WTC11 (cell line): ENCODE measurements at regions of chr19 and their contacts with region 1.

Region 1: DNA sequence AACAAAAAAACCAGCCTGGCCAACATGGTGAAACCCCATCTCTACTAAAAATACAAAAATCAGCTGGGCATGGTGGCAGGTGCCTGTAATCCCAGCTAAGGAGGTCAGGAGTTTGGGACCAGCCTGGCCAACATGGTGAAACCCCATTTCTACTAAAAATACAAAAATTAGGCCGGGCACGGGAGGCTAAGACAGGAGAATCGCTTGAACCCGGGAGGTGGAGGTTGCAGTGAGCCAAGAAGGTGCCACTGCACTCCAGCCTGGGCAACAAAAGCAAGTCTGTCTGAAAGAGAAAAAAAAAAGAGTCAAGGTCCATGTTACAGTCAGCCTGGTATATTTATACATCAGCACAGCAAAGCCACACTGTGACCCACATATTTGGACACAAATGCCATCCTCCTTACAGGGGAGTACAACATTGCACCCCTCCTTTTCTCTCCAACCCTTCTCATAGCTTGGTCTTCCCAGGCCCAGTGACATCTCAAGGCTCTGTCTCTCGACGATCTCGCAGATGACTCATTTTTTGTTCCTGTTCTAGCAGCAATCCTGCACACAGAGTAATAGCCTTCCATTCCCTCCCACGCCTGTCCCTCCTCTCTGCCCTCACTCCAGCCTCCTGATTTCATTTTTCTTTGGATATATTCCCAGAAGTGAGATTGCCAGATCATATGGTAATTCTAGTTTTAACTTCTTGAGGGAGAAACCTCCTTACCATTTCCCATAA is 21.0 kb upstream of the DPP9 start:
- DNase-seq: no peak
- ATAC-seq: no peak
- H3K4me3 Mint-ChIP-seq: no peak overlapping the region
- H3K27ac Mint-ChIP-seq: no peak overlapping the region
- H3K4me1 Mint-ChIP-seq: peaks cover 12% of the 10 kb centered on the region
- H3K27me3 Mint-ChIP-seq: peaks cover 3% of the 10 kb centered on the region; the same call in 1 of the 2 replicates
- CTCF ChIP-seq: no peak

Region 2: DNA sequence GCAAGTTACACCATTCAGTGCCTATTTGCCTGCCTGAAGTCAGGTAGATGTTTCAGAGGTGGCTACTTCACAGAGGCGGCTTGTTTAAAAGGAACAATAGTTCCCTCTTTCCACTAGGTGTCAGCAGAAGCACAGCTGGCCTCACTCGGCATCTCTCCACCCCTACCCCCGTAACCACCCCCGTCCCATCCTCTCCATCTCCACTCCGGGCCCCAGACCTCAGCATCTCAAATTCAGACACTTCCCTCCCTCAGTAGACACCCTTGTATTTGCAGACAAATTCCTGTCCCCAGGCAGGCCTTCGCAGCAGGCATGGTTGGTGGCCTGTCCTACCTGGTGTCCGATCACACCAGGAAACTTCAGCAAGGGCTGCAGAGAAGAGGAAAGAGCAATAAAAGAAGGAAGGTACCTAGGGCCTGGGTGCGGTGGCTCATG is 11.9 kb before region 1 on chr19:
- CTCF ChIA-PET with region 1: interaction called, 12 read pairs
- POLR2A ChIA-PET with region 1: no interaction called
- DNase-seq: peak; percentile 74
- ATAC-seq: peak; percentile 93
- H3K4me3 Mint-ChIP-seq: peak overlapping the region; percentile 57
- H3K27ac Mint-ChIP-seq: no peak overlapping the region; the same call in 1 of the 2 replicates
- H3K4me1 Mint-ChIP-seq: no peaks in the 10 kb centered on the region; the same call in 1 of the 2 replicates
- H3K27me3 Mint-ChIP-seq: peaks cover 2% of the 10 kb centered on the region
- CTCF ChIP-seq: peak; percentile 55; the same call in 1 of the 2 replicates

Region 3: GRCh38 chr19:4803736-4804695 is 59.4 kb after region 1 on chr19:
- CTCF ChIA-PET with region 1: interaction called, 17 read pairs
- POLR2A ChIA-PET with region 1: interaction called, 10 read pairs
- DNase-seq: peak; percentile 93
- ATAC-seq: peak; percentile 98
- H3K4me3 Mint-ChIP-seq: no peak overlapping the region
- H3K27ac Mint-ChIP-seq: no peak overlapping the region
- H3K4me1 Mint-ChIP-seq: no peaks in the 10 kb centered on the region
- H3K27me3 Mint-ChIP-seq: no peaks in the 10 kb centered on the region
- CTCF ChIP-seq: peak; percentile 90